ENCODE measurements at regions of chr12 and their contacts with region 1.

Region 1: DNA sequence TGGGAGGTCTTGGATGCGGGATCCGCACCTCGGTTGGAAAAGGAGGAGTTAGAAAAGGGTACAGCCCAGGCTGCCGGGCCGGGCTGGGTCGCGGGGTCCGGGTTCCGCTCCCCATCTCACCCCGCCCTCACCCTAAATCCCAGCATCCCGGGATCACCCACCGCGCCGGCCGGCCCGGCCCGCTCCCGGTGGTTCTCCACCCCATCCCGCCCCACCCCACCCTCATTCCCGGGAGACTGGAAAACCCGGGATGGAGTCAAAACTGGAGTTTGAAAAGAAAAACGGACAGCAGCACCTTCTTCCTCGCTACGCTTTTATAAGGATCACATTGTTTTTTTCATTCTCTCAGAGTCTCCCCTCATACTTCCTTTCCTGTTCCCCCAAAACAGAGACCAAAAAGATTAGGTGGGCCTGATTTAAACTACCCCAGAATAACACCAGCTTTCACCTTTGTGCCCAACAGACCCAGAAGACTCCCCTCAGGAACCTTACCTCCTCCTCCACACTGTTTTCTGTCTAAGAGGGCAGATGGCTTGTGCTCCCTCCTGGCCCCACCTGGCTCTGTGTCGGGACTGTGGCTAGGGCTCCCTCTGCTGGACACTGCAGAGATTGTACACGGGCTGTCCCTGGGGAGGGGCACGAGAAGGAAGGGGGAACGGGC is 2.8 kb downstream of the GLI1 start:
- DNase-seq: peak; percentile 78 to 93 (median 89)
- ATAC-seq: peak; percentile 64
- H3K4me3 ChIP-seq: peak overlapping the region; percentile 52 to 55
- H3K4me3 Mint-ChIP-seq: peak overlapping the region; percentile 92
- H3K27ac ChIP-seq: no peak overlapping the region
- H3K27ac Mint-ChIP-seq: peak overlapping the region; percentile 81
- H3K4me1 ChIP-seq: peaks cover 20% of the 10 kb centered on the region
- H3K4me1 Mint-ChIP-seq: peaks cover 34% of the 10 kb centered on the region
- H3K27me3 ChIP-seq: peaks cover 0 to 4% of the 10 kb centered on the region in 2 experiments
- H3K27me3 Mint-ChIP-seq: peaks cover 3% of the 10 kb centered on the region
- CTCF ChIP-seq: peak; percentile 92

Region 2: GRCh38 chr12:57261428-57261865 is 200.9 kb before region 1 on chr12:
- CTCF ChIA-PET with region 1: interaction called, 9 read pairs
- POLR2A ChIA-PET with region 1: no interaction called
- intact Hi-C with region 1: loop called (anchors 2 to 5 kb)
- DNase-seq: no peak
- ATAC-seq: no peak
- H3K4me3 ChIP-seq: no peak overlapping the region
- H3K4me3 Mint-ChIP-seq: no peak overlapping the region
- H3K27ac ChIP-seq: no peak overlapping the region
- H3K27ac Mint-ChIP-seq: no peak overlapping the region
- H3K4me1 ChIP-seq: no peaks in the 10 kb centered on the region
- H3K4me1 Mint-ChIP-seq: peaks cover 5% of the 10 kb centered on the region
- H3K27me3 ChIP-seq: no peaks in the 10 kb centered on the region
- H3K27me3 Mint-ChIP-seq: no peaks in the 10 kb centered on the region
- CTCF ChIP-seq: no peak

Region 3: GRCh38 chr12:57476162-57476992 is 14.0 kb after region 1 on chr12:
- CTCF ChIA-PET with region 1: interaction called, 177 read pairs
- POLR2A ChIA-PET with region 1: interaction called, 20 read pairs
- intact Hi-C with region 1: loop called (anchors 1 kb)
- DNase-seq: peak; percentile 50 to 83 (median 81)
- ATAC-seq: peak; percentile 22
- H3K4me3 ChIP-seq: peak overlapping the region; percentile 70 to 83
- H3K4me3 Mint-ChIP-seq: peak overlapping the region; percentile 99
- H3K27ac ChIP-seq: peak overlapping the region; percentile 95 to 98
- H3K27ac Mint-ChIP-seq: peak overlapping the region; percentile 98
- H3K4me1 ChIP-seq: peaks cover 77% of the 10 kb centered on the region
- H3K4me1 Mint-ChIP-seq: peaks cover 84% of the 10 kb centered on the region
- H3K27me3 ChIP-seq: no peaks in the 10 kb centered on the region
- H3K27me3 Mint-ChIP-seq: no peaks in the 10 kb centered on the region
- CTCF ChIP-seq: peak; percentile 67

Region 4: DNA sequence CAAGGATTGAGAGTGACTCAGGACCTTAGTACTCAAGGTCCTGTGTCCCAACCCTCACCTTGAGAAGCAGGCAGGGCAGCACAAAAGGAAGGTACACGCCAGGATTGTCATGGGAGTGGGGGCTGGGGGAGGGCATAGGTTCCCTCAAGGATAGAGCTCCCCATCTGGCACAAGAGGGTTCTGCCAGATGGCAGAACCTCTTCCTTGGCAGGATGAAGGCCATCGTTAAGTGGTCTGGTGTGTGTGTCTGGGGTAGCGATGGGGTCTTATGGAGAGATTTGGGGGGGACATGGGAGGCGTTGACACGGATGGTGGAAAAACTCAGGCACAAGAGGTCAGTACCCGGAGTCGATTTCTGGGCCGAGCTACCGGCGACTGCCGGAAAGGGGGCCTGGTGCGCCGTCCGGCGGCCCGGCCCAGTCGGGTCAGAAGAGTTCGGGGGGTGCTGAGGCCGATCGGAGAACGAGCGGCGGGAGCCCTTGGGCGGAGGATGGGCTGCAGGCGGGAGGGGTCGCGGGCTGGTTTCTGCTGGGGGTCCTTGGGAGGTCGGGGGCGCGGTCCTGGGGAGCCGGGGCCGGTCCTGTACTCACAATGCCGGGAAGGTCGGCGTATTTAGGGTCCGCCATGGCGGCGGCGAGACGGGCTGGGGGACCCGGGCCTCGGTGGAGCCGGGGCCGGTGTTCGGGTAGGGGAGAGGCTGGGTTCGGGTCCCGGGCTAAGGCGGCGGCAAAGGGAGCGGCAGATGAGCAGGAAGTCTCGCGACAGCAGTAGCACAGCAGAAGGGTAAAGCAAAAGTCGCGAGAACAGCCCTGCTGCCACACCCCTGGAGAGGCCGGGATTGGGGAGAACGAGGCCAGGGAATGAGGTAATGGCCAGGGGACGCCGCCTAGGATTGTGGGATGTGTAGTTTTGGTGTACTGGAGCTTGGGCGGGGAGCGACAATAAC is 84.3 kb after region 1 on chr12 and contains the start of gene DCTN2:
- CTCF ChIA-PET with region 1: interaction called, 5 read pairs
- POLR2A ChIA-PET with region 1: no interaction called
- intact Hi-C with region 1: loop called in 1 of 2 experiments (anchors 2 kb)
- DNase-seq: peak; percentile 79 to 97 (median 89)
- ATAC-seq: peak; percentile 94
- H3K4me3 ChIP-seq: peak within 1 kb of the TSS; percentile 63 to 94
- H3K4me3 Mint-ChIP-seq: peak within 1 kb of the TSS; percentile 92
- H3K27ac ChIP-seq: peak within 1 kb of the TSS; percentile 63 to 87
- H3K27ac Mint-ChIP-seq: peak within 1 kb of the TSS; percentile 91
- H3K4me1 ChIP-seq: peaks cover 27% of the 10 kb centered on the region
- H3K4me1 Mint-ChIP-seq: peaks cover 57% of the 10 kb centered on the region
- H3K27me3 ChIP-seq: no peaks in the 10 kb centered on the region
- H3K27me3 Mint-ChIP-seq: no peaks in the 10 kb centered on the region
- CTCF ChIP-seq: no peak
- total RNA-seq, gene DCTN2: 39.2 to 43.3 TPM

Region 5: GRCh38 chr12:57693659-57694458 is 231.5 kb after region 1 on chr12 and contains the start of gene OS9:
- CTCF ChIA-PET with region 1: no interaction called
- POLR2A ChIA-PET with region 1: interaction called, 3 read pairs
- intact Hi-C with region 1: loop called (anchors 5 to 10 kb)
- DNase-seq: peak; percentile 89 to 100 (median 92)
- ATAC-seq: peak; percentile 92
- H3K4me3 ChIP-seq: peak within 1 kb of the TSS; percentile 89 to 95
- H3K4me3 Mint-ChIP-seq: no peak within 1 kb of the TSS
- H3K27ac ChIP-seq: peak within 1 kb of the TSS; percentile 77 to 81
- H3K27ac Mint-ChIP-seq: no peak within 1 kb of the TSS
- H3K4me1 ChIP-seq: peaks cover 17% of the 10 kb centered on the region
- H3K4me1 Mint-ChIP-seq: peaks cover 18% of the 10 kb centered on the region
- H3K27me3 ChIP-seq: no peaks in the 10 kb centered on the region
- H3K27me3 Mint-ChIP-seq: peaks cover 5% of the 10 kb centered on the region
- CTCF ChIP-seq: peak; percentile 90
- total RNA-seq, gene OS9: 105 to 119 TPM

Measured in CD8-positive, alpha-beta T cell (primary cell).